Panc1 (cell line): ENCODE measurements at regions of chr1 and their contacts with region 1.

Region 1: DNA sequence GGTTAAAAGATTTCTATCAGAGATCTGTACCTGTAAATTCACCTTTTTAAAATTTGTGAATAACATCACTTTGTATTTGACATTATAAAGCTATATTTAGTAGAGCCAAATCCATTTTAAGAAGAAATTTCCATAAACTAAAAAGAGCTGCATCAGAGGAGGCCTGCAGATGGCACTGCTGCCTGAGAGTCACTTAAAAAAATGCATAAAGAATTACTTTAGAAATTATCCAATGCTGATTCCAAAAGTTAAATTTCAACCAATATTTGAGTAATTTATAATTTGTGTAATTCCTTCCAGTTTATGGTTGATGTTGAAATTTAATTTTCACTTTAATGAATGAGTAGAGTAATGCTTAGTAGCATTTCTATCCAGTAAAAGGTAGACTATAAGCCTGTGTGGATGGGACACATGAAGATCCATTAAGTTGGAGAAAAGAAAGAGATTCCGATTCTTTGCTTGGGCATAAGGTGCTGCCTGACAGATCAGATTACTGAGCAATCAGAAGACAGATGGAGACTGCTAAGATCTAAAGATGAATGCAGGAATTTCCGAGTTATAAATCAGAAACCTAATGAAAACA is 20.7 kb upstream of the RPE65 start:
- DNase-seq: no peak
- ATAC-seq: no peak
- H3K4me3 ChIP-seq: no peak overlapping the region
- H3K27ac ChIP-seq: no peak overlapping the region
- H3K4me1 ChIP-seq: no peaks in the 10 kb centered on the region
- H3K27me3 ChIP-seq: no peaks in the 10 kb centered on the region
- CTCF ChIP-seq: peak; percentile 77; the same call in 1 of the 2 replicates

Region 2: DNA sequence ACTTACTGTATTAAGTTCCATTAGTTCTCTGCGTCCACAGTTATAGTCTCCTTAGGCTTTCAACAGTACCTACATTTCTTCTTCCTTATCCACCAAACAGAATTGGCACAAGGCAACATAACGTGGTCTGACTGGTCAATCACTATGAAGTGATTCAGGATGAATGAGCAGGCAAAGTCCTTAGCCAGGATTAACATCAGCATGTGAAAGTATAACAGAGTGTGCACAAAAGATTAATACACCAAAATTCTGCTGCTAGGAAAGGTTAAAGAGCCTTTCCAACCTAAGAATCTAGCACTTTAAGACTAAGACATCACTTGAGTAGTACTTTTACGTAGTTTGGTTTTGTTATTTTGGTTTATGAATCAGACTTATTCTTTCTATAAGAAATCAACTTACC is 10.6 kb after region 1 on chr1:
- CTCF ChIA-PET with region 1: interaction called, 14 read pairs
- POLR2A ChIA-PET with region 1: no interaction called
- in situ Hi-C with region 1: no loop called
- intact Hi-C with region 1: no loop called
- DNase-seq: no peak
- ATAC-seq: no peak
- H3K4me3 ChIP-seq: no peak overlapping the region
- H3K27ac ChIP-seq: no peak overlapping the region
- H3K4me1 ChIP-seq: no peaks in the 10 kb centered on the region
- H3K27me3 ChIP-seq: no peaks in the 10 kb centered on the region
- CTCF ChIP-seq: no peak

Region 3: GRCh38 chr1:69737527-69738185 is 1267.2 kb after region 1 on chr1:
- CTCF ChIA-PET with region 1: no interaction called
- POLR2A ChIA-PET with region 1: no interaction called
- in situ Hi-C with region 1: no loop called
- intact Hi-C with region 1: loop called (anchors 5 kb)
- DNase-seq: peak; percentile 42
- ATAC-seq: peak; percentile 84
- H3K4me3 ChIP-seq: no peak overlapping the region
- H3K27ac ChIP-seq: no peak overlapping the region
- H3K4me1 ChIP-seq: no peaks in the 10 kb centered on the region
- H3K27me3 ChIP-seq: 0 out of 2 replicates have a peak, but pooled peaks cover 2% of the 10 kb centered on the region
- CTCF ChIP-seq: peak; percentile 72